Right cardiac atrium (tissue), 5 donors: ENCODE measurements at regions of chr6 and their contacts with region 1.

Region 1: GRCh38 chr6:153947808-153948447 is 91.1 kb upstream of the OPRM1 start:
- DNase-seq: no peak
- ATAC-seq: no peak
- H3K4me3 ChIP-seq: no peak overlapping the region
- H3K27ac ChIP-seq: no peak overlapping the region
- H3K4me1 ChIP-seq: no peaks in the 10 kb centered on the region
- H3K27me3 ChIP-seq: no peaks in the 10 kb centered on the region

Region 2: GRCh38 chr6:153032255-153032882 is 915.6 kb before region 1 on chr6:
- intact Hi-C with region 1: loop called in 1 of 4 experiments (anchors 10 kb)
- DNase-seq: no peak
- ATAC-seq: no peak
- H3K4me3 ChIP-seq: no peak overlapping the region
- H3K27ac ChIP-seq: no peak overlapping the region
- H3K4me1 ChIP-seq: no peaks in the 10 kb centered on the region
- H3K27me3 ChIP-seq: no peaks in the 10 kb centered on the region

Region 3: DNA sequence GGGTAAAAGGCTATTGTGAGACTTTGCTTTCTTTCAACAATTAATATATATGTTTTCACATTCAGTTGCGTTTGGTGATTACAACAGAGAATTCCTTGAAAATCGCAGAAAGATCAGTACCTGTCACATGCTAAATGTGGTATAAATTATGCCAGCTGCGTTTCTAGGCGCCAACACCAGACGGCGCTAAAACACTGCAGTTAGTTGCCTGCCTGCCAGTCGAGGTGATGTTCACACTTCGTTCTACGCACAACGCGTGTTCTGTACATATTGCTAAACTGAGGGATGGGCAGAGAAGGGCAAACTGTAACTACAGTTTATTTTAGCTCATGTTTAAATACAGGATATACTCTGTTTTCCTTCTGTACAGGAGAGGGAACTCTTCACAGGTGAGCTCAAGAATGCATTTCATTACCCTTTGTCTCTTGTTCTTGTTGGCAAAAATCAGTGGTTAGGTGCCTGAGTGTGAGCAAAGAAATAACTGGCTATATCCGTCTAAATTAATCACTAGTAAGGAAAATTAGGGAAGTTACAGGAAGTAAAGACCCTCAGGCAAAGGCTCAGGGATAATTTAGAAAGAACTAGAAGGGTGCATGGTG is 716.8 kb before region 1 on chr6:
- intact Hi-C with region 1: loop called in 3 of 4 experiments (anchors 5 kb)
- DNase-seq: peak; percentile 19 to 59 (median 46)
- ATAC-seq: no peak
- H3K4me3 ChIP-seq: no peak overlapping the region
- H3K27ac ChIP-seq: no peak overlapping the region
- H3K4me1 ChIP-seq: no peaks in the 10 kb centered on the region
- H3K27me3 ChIP-seq: no peaks in the 10 kb centered on the region